CD8-positive, alpha-beta T cell (primary cell): ENCODE measurements at regions of chr1 and their contacts with region 1.

Region 1: GRCh38 chr1:151059078-151059907 is at the start of gene CDC42SE1:
- DNase-seq: peak; percentile 72 to 95 (median 86)
- ATAC-seq: peak; percentile 75
- H3K4me3 ChIP-seq: peak within 1 kb of the TSS; percentile 90 to 93
- H3K4me3 Mint-ChIP-seq: peak within 1 kb of the TSS; percentile 99
- H3K27ac ChIP-seq: peak within 1 kb of the TSS; percentile 88 to 95
- H3K27ac Mint-ChIP-seq: peak within 1 kb of the TSS; percentile 98
- H3K4me1 ChIP-seq: peaks cover 29% of the 10 kb centered on the region
- H3K4me1 Mint-ChIP-seq: peaks cover 56% of the 10 kb centered on the region
- H3K27me3 ChIP-seq: no peaks in the 10 kb centered on the region
- H3K27me3 Mint-ChIP-seq: no peaks in the 10 kb centered on the region
- CTCF ChIP-seq: peak; percentile 81
- total RNA-seq, gene CDC42SE1: 275 to 282 TPM

Region 2: DNA sequence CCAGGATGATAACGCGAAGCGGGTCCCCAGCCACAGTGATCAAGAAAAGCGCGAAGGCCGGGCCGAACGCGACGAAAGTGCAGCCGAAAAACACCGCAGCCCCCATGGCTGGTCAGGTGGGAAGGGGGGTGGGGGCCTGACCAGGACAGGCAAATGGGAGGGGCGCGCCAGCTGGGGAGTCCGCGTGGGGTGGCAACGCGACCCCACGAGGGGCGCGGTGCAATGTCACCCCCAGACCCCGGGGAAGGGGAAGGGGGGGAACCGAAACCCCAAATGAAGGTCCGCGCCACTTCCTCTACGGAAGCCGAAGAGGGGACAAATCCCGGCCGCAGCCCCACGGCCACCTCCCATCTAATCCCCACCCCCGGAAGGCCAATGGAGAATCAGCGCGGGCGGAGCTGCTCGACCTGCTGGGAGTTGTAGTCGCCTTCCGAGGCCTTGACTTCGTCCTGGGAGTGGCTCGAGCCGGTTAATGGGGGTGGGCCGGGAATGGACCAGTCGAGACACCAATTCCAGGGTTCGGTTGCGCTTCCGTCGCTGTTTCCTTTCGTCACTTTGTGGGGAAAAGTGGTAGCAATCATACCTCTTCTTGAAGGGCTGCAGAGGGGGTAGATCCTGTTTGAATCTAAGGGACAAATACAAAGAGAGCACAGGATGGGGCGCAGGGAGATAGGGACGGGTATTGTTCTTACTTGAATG is 790.4 kb before region 1 on chr1 and contains the start of gene APH1A:
- CTCF ChIA-PET with region 1: no interaction called
- POLR2A ChIA-PET with region 1: no interaction called
- intact Hi-C with region 1: loop called in 1 of 2 experiments (anchors 5 kb)
- DNase-seq: peak; percentile 78 to 96 (median 92)
- ATAC-seq: peak; percentile 90
- H3K4me3 ChIP-seq: peak within 1 kb of the TSS; percentile 80 to 95
- H3K4me3 Mint-ChIP-seq: peak within 1 kb of the TSS; percentile 90
- H3K27ac ChIP-seq: peak within 1 kb of the TSS; percentile 87 to 96
- H3K27ac Mint-ChIP-seq: peak within 1 kb of the TSS; percentile 98
- H3K4me1 ChIP-seq: peaks cover 18% of the 10 kb centered on the region
- H3K4me1 Mint-ChIP-seq: peaks cover 26% of the 10 kb centered on the region
- H3K27me3 ChIP-seq: no peaks in the 10 kb centered on the region
- H3K27me3 Mint-ChIP-seq: no peaks in the 10 kb centered on the region
- CTCF ChIP-seq: no peak
- total RNA-seq, gene APH1A: 124 to 134 TPM

Region 3: GRCh38 chr1:150578965-150579798 is 480.1 kb before region 1 on chr1 and contains the start of gene MCL1:
- CTCF ChIA-PET with region 1: no interaction called
- POLR2A ChIA-PET with region 1: interaction called, 3 read pairs
- intact Hi-C with region 1: loop called (anchors 5 kb)
- DNase-seq: peak; percentile 66 to 94 (median 88)
- ATAC-seq: peak; percentile 69
- H3K4me3 ChIP-seq: peak within 1 kb of the TSS; percentile 88 to 94
- H3K4me3 Mint-ChIP-seq: peak within 1 kb of the TSS; percentile 96
- H3K27ac ChIP-seq: peak within 1 kb of the TSS; percentile 90 to 97
- H3K27ac Mint-ChIP-seq: peak within 1 kb of the TSS; percentile 98
- H3K4me1 ChIP-seq: peaks cover 7% of the 10 kb centered on the region
- H3K4me1 Mint-ChIP-seq: peaks cover 37% of the 10 kb centered on the region
- H3K27me3 ChIP-seq: no peaks in the 10 kb centered on the region
- H3K27me3 Mint-ChIP-seq: no peaks in the 10 kb centered on the region
- CTCF ChIP-seq: no peak
- total RNA-seq, gene MCL1: 682 to 685 TPM

Region 4: DNA sequence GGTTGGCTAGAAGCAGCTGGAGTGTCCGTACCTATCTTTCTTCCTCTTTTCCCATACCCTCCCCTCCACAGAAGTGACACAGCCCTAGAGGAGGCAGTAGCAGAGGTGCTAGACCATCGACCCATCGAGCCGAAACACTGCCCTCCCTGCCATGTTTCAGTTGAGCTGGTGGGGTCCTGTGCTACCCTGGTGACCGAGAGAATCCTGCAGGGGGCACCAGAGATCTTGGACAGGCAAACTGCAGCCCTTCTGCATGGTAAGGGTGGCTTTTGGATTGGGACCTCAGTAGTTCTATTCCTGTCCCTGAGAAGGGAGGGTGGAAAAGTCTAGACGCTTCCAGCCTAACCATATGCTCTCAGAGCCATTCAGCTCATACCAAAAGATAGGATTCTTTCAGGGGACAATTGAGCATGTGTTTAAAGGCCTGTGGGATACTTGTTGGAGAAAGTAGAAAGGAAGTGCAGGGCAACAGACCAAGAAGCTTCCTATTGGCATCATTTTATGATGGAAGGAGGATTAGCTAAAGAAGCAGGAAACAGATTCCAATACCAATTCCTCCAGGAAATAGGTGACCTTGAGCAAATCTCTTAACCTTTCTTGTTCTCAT is 34.6 kb before region 1 on chr1:
- CTCF ChIA-PET with region 1: interaction called, 99 read pairs
- POLR2A ChIA-PET with region 1: interaction called, 5 read pairs
- intact Hi-C with region 1: loop called (anchors 1 kb)
- DNase-seq: peak; percentile 77 to 94 (median 89)
- ATAC-seq: peak; percentile 100
- H3K4me3 ChIP-seq: peak overlapping the region in 1 of 2 experiments; percentile 40
- H3K4me3 Mint-ChIP-seq: peak overlapping the region; percentile 58
- H3K27ac ChIP-seq: no peak overlapping the region
- H3K27ac Mint-ChIP-seq: no peak overlapping the region
- H3K4me1 ChIP-seq: peaks cover 7% of the 10 kb centered on the region
- H3K4me1 Mint-ChIP-seq: peaks cover 7% of the 10 kb centered on the region
- H3K27me3 ChIP-seq: no peaks in the 10 kb centered on the region
- H3K27me3 Mint-ChIP-seq: no peaks in the 10 kb centered on the region
- CTCF ChIP-seq: peak; percentile 77

Region 5: DNA sequence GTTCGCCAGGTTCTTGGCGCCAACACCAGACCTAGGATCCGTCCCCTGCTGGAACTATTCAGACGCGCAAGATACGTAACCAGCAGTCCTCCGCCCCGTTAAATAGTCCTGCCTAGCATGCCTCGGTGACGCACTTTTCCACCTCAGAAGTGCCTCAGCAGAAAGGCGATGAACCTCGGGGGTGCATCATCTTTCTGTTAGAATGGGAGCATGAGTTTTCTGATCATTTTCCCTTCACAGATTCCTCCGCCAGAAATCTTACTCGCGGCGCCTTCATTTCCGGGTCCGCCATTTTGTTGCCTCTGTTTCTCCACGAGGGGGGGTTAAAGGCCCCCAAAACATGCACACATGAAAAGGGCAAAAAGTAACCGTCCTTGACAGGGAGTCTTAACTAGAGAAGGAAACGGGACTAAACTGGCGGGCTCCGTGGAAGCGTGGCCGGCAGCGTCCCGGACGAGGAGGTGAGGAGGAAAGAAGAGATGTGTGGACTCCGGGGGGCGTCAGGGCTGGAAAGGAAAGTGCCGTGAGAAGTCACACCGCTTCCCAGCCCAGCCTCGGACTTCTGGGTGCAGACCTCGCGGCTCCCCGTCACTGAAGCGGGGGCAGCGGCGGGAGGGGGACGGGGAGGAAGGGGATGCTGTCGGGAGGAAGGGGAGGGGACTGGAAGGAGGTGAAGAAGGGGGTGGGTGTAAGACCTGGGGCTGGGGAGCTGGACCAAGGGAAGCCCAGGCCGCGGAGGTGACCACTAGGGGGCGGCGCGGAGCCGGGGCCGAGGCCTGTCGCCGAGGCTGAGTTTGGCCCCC is 11.4 kb after region 1 on chr1 and contains the start of gene GABPB2:
- CTCF ChIA-PET with region 1: interaction called, 72 read pairs
- POLR2A ChIA-PET with region 1: interaction called, 12 read pairs
- intact Hi-C with region 1: loop called (anchors 1 kb)
- DNase-seq: peak; percentile 69 to 96 (median 86)
- ATAC-seq: peak; percentile 81
- H3K4me3 ChIP-seq: peak within 1 kb of the TSS; percentile 78 to 97
- H3K4me3 Mint-ChIP-seq: peak within 1 kb of the TSS; percentile 99
- H3K27ac ChIP-seq: peak within 1 kb of the TSS; percentile 89 to 90
- H3K27ac Mint-ChIP-seq: peak within 1 kb of the TSS; percentile 100
- H3K4me1 ChIP-seq: peaks cover 11% of the 10 kb centered on the region
- H3K4me1 Mint-ChIP-seq: peaks cover 29% of the 10 kb centered on the region
- H3K27me3 ChIP-seq: no peaks in the 10 kb centered on the region
- H3K27me3 Mint-ChIP-seq: no peaks in the 10 kb centered on the region
- CTCF ChIP-seq: peak; percentile 91
- total RNA-seq, gene GABPB2: 20.0 to 21.9 TPM

Region 6: DNA sequence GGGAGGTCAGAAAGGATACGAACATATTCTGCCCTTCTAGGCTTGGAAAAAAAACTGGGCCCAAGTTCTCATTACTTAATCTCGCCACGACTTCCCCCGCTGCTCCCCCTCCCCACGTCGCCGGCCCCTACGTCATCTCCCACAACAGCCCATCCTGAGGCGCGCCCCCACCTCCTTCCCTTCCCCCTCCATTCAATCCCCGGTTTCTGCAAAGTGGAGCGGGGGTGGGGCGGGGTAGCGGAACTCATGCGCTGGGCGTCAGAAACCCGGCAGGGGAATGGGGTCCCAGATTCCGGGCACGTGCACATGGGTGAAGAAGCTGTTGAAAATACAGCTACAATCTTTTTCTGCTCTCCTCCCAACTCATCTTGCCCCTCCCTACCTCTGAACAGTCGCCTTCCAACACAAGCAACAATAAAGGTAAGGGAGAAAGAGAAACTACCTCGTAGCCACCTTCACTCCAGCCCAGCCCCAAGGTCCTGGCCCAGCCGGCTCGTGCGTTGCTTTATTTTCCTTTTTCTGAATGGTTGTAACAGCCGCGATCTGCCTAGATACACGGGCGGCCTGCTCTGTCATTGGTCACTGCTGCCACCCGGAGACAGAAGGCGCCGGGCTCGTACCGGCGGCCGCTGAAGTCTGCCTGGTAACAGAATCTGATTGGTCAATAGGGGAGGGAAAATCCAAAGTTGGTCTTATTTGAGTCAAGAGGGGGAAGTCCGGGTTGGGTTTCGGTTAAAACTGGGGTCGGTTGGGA is 287.7 kb after region 1 on chr1 and contains the start of gene RFX5:
- CTCF ChIA-PET with region 1: no interaction called
- POLR2A ChIA-PET with region 1: no interaction called
- intact Hi-C with region 1: loop called in 1 of 2 experiments (anchors 5 kb)
- DNase-seq: peak; percentile 85 to 99 (median 93)
- ATAC-seq: peak; percentile 92
- H3K4me3 ChIP-seq: peak within 1 kb of the TSS; percentile 75 to 83
- H3K4me3 Mint-ChIP-seq: peak within 1 kb of the TSS; percentile 95
- H3K27ac ChIP-seq: peak within 1 kb of the TSS; percentile 89 to 98
- H3K27ac Mint-ChIP-seq: peak within 1 kb of the TSS; percentile 99
- H3K4me1 ChIP-seq: peaks cover 15% of the 10 kb centered on the region
- H3K4me1 Mint-ChIP-seq: peaks cover 38% of the 10 kb centered on the region
- H3K27me3 ChIP-seq: no peaks in the 10 kb centered on the region
- H3K27me3 Mint-ChIP-seq: no peaks in the 10 kb centered on the region
- CTCF ChIP-seq: no peak
- total RNA-seq, gene RFX5: 62.6 to 65.9 TPM